Ascending aorta (tissue), 2 donors: ENCODE measurements at regions of chr2 and their contacts with region 1.

Region 1: GRCh38 chr2:10285556-10286198 is 17.0 kb upstream of the HPCAL1 start:
- DNase-seq: peak; percentile 75 to 91
- H3K4me3 ChIP-seq: peak overlapping the region in 1 of 2 donors; percentile 25
- H3K27ac ChIP-seq: peak overlapping the region; percentile 75 to 84
- H3K4me1 ChIP-seq: peaks cover 4 to 16% of the 10 kb centered on the region in 2 donors
- H3K27me3 ChIP-seq: no peaks in the 10 kb centered on the region
- CTCF ChIP-seq: peak in 2 of 3 experiments; percentile 5 to 13

Region 2: DNA sequence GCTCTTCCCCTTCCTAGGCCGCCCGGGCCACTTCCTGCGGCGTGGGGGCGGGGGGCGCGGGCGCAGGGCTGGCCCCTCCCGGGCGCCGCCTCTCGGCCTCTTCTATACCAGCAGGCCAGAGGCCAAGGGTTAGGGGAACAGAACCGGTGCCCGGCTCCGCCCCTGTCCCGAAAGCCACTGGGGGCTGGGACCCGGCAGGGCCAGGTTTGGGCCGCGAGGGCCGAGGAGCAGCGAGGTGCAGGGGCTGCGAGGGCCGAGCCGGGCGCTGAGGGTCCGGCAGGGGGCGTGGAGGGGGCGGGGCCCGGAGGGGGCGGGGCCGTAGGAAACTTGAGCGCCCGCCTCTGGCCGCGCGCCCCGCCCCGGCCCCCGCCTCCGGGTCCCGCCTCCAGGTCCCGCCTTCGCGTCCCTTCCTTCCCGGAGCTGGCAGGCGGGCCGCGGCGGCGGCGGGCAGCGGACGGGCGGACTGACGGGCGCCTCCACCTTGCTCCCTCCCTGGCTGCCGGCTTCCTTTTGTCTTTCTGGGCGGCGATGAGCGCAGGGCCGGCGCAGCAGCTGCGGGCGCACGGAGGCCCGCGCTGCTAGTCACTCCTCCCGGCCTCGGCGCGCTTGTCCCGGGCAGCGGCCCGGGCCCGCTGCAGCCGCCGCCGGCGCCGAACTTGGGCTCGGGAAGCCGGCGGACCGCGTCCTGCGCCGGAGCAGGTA is 17.0 kb after region 1 on chr2 and contains the start of gene HPCAL1:
- intact Hi-C with region 1: loop called (anchors 1 kb)
- DNase-seq: peak; percentile 30 to 90
- H3K4me3 ChIP-seq: peak within 1 kb of the TSS; percentile 68 to 92
- H3K27ac ChIP-seq: peak within 1 kb of the TSS; percentile 78 to 84
- H3K4me1 ChIP-seq: peaks cover 0 to 6% of the 10 kb centered on the region in 2 donors
- H3K27me3 ChIP-seq: no peaks in the 10 kb centered on the region
- CTCF ChIP-seq: peak; percentile 50 to 70 (median 59)
- total RNA-seq, gene HPCAL1: 401 TPM